Sigmoid colon (tissue), 7 donors: ENCODE measurements at regions of chr7 and their contacts with region 1.

Region 1: DNA sequence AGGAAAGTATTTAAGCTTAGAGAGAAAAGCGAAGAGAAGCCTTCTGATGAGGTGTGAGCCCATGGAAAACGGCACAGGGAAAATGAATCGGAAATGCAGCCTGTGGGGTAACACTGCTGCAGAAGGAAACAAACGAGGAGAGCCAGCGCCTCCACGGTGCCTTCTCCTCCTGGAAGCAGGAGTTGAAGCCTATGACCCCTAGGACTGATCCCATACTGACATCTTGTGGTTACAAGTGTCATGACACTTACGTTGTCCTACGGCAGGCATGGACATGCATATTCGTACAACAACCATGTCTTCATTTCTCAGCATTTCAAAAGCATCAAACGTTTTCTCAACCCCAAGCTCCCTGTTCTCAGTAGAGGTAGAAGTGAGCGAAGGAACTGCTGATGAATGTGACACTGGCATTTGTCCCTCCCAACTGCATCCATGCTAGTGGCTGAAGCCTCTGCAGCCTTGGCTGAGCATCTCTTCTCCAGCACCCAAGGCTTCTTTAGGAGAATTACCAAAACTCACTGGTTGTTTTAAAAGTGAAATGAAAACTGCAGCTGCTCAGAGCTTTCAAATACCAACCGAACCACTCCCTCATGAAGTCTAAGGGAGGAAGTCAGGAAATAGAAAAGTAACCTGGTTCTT is 160.2 kb downstream of the JAZF1 start:
- DNase-seq: peak; percentile 88
- H3K4me3 ChIP-seq: no peak overlapping the region
- H3K27ac ChIP-seq: peak overlapping the region in 2 of 4 donors; percentile 75 to 76
- H3K4me1 ChIP-seq: peaks cover 0 to 70% (median 56%) of the 10 kb centered on the region in 4 donors
- H3K27me3 ChIP-seq: no peaks in the 10 kb centered on the region
- CTCF ChIP-seq: peak; percentile 79 to 84 (median 83)
- EP300 ChIP-seq: no peak
- POLR2A ChIP-seq: no peak

Region 2: DNA sequence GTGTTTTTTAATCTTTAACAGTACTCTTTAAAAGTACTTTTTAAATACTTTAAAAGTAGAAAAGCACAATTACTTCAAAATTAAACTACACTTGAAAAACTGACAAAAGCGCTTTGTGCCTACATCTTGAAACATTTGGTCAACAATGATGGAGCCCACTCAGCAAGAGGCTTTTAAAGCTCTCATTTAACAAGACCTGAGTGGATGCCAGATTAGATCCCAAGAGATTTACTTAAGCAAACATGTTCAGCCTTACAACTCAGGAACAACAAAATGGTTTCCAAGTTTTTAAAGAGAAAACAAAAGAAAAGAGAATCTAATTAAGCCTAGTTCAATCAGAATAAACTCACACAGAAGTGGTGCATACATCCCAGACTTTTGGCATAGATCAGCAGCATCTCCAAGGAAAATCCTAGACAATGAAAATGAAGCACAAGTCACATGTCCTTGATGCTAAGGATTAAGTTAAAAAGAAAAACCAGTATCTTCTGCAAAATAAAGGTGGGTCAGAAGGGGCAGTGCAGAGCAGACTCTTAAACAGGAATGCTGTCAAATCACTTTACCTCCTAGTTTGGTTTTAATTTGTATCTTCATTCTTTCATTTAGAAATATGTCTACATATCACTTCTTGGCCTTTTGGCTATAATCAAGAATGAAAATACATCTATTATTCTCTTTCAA is 384.0 kb before region 1 on chr7:
- intact Hi-C with region 1: no loop called
- DNase-seq: no peak
- H3K4me3 ChIP-seq: no peak overlapping the region
- H3K27ac ChIP-seq: no peak overlapping the region
- H3K4me1 ChIP-seq: peaks cover 0 to 22% (median 11%) of the 10 kb centered on the region in 4 donors
- H3K27me3 ChIP-seq: no peaks in the 10 kb centered on the region
- CTCF ChIP-seq: no peak
- EP300 ChIP-seq: no peak
- POLR2A ChIP-seq: no peak

Region 3: GRCh38 chr7:27739909-27740448 is 280.4 kb before region 1 on chr7 and contains the start of gene TAX1BP1:
- intact Hi-C with region 1: loop called (anchors 5 kb)
- DNase-seq: peak; percentile 98
- H3K4me3 ChIP-seq: peak within 1 kb of the TSS; percentile 68 to 93 (median 90)
- H3K27ac ChIP-seq: peak within 1 kb of the TSS; percentile 93 to 99 (median 97)
- H3K4me1 ChIP-seq: peaks cover 0 to 47% (median 31%) of the 10 kb centered on the region in 4 donors
- H3K27me3 ChIP-seq: no peaks in the 10 kb centered on the region
- CTCF ChIP-seq: no peak
- EP300 ChIP-seq: peak in 1 of 4 donors; percentile 18
- POLR2A ChIP-seq: peak; percentile 99
- total RNA-seq, gene TAX1BP1: 109 to 170 (median 138) TPM

Region 4: DNA sequence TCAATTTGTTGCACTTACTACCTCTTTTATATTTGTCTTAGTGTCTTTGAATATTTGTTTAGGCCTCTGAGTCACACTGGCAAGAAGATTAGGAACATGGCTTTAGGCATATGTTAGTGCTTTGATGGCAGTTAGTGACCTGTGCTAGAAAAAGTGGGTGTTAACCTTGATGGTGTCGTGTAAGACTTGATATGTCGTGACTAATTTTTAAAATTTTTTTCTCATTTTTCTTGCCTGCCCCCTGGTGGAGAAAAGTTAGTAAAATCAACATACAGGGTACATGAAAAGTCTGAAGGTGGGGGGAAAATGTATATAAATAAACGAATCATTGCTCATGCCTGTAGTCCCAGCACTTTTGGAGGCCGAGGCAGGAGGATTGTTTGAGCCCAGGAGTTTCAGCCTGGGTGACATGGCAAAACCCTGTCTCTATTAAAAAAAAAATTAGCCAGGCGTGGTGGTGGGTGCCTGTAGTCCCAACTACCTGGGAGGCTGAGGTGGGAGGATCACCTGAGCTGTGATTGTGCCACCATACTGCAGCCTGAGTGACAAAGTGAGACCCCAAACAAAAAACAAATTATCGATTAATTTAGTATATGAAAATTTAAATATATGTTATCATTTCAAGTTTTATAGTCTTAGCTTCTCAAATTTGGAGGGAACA is 235.9 kb before region 1 on chr7:
- intact Hi-C with region 1: loop called (anchors 5 kb)
- DNase-seq: no peak
- H3K4me3 ChIP-seq: no peak overlapping the region
- H3K27ac ChIP-seq: no peak overlapping the region
- H3K4me1 ChIP-seq: peaks cover 0 to 9% (median 8%) of the 10 kb centered on the region in 4 donors
- H3K27me3 ChIP-seq: no peaks in the 10 kb centered on the region
- CTCF ChIP-seq: peak in 3 of 4 experiments; percentile 36 to 46 (median 42)
- EP300 ChIP-seq: no peak
- POLR2A ChIP-seq: no peak